ENCODE measurements at regions of chr11 and their contacts with region 1.

Region 1: DNA sequence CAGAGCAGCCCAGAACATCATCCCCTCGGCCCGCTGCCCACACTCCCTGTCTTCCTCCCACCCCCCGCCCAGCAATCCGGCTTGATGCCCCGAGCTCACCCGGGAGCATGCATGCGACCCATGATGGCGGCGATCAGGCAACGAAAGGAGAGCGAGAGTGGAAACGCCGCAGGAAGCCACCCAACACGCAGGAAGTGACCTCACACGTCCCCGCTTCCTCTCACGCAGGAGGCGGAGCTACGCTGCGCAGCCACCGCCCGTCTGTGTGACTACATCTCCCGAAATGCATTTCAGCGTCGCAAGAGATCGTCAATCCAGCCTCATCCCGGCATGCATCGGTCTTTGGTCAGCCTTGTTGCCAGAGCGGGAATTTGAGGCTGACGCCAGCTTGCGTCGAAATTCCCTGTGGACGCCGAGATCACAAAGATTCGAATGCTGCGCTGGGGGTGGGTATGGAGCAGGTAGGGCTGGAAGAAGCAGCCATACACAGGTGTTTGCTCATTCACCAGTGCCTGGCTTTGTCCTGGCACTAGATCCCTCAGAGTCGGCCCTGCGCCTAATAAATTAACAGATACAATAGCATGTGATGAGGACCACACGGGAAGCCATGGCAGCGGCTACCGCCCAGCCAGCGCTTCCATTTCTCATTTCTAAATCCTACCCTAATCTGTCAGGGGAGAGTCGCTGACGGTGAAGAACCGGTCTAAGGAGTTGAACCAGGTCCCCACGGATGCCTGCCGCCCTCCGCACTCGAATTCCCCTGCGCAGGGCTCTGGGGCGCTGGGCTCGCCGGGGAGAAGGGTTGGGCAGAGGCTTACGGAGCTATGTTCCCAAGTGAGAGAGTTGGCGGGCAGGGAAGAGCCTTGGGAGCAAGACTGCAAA is at the start of gene RPS13:
- DNase-seq: peak; percentile 99
- ATAC-seq: peak; percentile 95
- H3K4me3 ChIP-seq: peak within 1 kb of the TSS; percentile 79
- H3K27ac ChIP-seq: peak within 1 kb of the TSS; percentile 63
- H3K4me1 ChIP-seq: peaks cover 19% of the 10 kb centered on the region
- H3K27me3 ChIP-seq: no peaks in the 10 kb centered on the region
- CTCF ChIP-seq: no peak
- total RNA-seq, gene RPS13: 676 and 892 TPM in 2 replicates

Region 2: GRCh38 chr11:16791191-16791961 is 286.4 kb before region 1 on chr11:
- CTCF ChIA-PET with region 1: no interaction called
- POLR2A ChIA-PET with region 1: interaction called, 12 read pairs
- intact Hi-C with region 1: no loop called
- DNase-seq: peak; percentile 88
- ATAC-seq: peak; percentile 64
- H3K4me3 ChIP-seq: no peak overlapping the region
- H3K27ac ChIP-seq: peak overlapping the region; percentile 68
- H3K4me1 ChIP-seq: peaks cover 51% of the 10 kb centered on the region
- H3K27me3 ChIP-seq: no peaks in the 10 kb centered on the region
- CTCF ChIP-seq: no peak

Region 3: DNA sequence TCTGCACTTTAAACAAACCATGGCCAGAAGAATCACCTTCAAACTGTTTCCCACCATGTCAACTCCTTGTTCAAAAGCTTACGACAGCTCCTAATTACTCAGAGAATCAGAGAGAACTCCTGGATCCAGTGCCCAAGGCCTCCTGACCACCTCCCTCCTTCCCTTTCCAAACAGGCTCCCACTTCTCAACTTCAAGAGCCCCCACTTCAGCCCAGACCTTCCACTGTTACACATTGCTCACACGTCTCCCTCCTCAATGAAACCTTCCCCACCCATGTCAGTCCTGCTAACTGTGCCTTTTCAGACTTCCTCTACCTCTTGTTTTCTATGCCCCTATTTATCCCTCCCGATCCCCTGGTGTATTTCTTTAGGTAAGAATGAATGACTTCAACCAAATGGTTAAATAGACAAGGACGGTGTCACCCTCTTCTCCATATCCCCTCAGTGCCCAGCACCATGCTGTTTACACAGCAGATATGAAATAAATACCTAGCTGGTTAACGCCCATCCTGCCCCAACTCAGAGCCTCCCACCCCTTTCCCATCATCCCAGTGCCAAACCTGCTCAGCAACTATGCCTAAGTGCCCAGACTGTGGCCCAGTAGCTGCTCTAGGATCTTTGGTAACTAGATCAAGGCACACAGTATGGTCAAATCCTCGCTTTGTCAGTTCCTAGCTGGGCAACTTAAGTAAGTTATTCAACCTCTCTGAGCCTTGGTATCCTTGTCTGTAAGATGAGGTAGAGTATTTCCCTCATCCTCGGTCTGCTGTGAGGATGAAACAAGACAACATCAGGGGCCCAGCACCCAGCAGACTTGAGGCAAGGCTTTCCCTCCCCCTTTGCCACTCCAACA is 100.4 kb before region 1 on chr11:
- CTCF ChIA-PET with region 1: no interaction called
- POLR2A ChIA-PET with region 1: no interaction called
- intact Hi-C with region 1: no loop called
- DNase-seq: no peak
- ATAC-seq: no peak
- H3K4me3 ChIP-seq: no peak overlapping the region
- H3K27ac ChIP-seq: no peak overlapping the region
- H3K4me1 ChIP-seq: peaks cover 8% of the 10 kb centered on the region; the same call in 1 of the 2 replicates
- H3K27me3 ChIP-seq: no peaks in the 10 kb centered on the region
- CTCF ChIP-seq: no peak

Region 4: DNA sequence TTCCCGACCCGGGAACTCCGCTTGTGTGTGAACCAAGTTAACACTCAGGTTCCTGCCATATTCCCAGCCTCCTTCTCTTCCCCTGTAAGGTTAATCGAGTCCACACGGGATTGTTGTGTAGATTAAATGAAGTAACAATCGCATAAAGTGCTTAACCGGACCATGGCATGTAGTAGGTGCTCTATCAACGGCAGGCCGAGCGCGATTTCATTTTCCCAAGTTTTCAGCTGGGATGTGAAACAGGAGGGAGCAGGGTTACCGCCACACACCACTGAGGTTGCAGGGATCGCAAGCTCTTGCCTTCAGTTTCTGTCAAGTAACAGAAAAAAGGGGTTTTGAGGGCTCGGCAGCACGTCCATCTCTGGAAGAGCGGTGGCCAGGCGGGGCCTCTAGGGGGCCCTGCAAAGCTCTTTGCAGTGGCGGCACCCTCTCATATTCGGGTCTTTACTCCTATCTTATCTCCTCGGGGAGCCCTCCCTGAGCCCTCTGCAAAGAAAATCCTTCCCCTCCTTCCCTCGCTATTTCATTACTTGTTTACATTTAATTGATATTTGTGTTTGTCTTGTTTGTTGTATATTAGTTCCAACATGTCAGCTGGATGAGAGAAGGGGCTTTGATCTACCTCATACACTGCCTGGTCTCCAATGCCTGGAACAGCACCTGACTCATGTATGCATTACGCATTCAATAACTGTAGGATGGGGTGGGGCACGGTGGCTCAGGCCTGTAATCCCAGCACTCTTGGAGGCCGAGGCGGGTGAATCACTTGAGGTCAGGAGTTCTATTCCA is 62.7 kb before region 1 on chr11:
- CTCF ChIA-PET with region 1: no interaction called
- POLR2A ChIA-PET with region 1: no interaction called
- intact Hi-C with region 1: loop called (anchors 2 kb)
- DNase-seq: peak; percentile 83
- ATAC-seq: peak; percentile 39
- H3K4me3 ChIP-seq: peak overlapping the region; percentile 73
- H3K27ac ChIP-seq: peak overlapping the region; percentile 42
- H3K4me1 ChIP-seq: peaks cover 30% of the 10 kb centered on the region
- H3K27me3 ChIP-seq: no peaks in the 10 kb centered on the region
- CTCF ChIP-seq: peak; percentile 76

Region 5: DNA sequence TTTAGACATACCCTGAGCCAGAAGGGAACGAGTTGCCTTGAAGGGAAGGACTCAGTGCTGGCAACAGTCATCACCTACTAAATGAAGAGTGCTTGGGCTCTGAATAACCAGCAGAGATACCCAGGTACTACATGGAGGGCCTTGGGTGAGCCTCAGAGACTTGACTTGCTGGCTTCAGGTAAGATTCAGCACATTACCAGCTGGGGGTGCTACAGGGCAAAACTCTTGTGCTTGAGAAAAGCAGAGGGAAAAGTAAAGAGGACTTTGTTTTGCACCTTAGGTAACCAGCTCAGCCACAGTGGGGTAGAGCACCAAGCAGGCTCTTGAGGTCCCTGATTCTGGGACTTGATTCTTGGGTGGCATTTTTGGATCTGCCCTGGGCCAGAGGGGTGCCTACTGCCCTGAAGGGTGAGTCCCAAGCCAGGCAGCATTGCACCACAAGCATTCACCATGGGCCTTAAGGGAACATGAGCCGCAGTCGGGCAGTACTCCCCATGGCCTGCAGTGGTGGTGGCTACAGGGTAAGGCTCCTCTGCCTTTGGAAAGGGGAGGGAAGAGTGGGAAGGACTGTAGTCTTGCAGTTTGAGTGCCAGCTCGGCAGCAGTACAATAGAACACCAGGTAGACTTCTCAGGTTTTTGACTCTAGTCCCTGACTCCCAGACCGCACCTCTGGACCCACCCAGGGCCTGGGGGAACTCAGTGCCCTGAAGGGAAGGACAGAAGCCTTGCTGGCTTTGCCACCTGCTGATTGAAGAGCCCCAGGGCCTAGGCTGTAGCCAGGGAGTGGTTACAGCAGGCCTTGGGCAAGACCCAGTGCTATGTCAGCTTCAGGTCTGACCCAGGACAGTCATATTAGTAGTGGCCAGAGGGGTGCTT is 40.9 kb before region 1 on chr11:
- CTCF ChIA-PET with region 1: no interaction called
- POLR2A ChIA-PET with region 1: no interaction called
- intact Hi-C with region 1: no loop called
- DNase-seq: peak; percentile 26
- ATAC-seq: no peak
- H3K4me3 ChIP-seq: no peak overlapping the region
- H3K27ac ChIP-seq: no peak overlapping the region
- H3K4me1 ChIP-seq: no peaks in the 10 kb centered on the region
- H3K27me3 ChIP-seq: no peaks in the 10 kb centered on the region
- CTCF ChIP-seq: 0 out of 2 replicates have a peak, but pooled peaks have one; percentile 29

Region 6: DNA sequence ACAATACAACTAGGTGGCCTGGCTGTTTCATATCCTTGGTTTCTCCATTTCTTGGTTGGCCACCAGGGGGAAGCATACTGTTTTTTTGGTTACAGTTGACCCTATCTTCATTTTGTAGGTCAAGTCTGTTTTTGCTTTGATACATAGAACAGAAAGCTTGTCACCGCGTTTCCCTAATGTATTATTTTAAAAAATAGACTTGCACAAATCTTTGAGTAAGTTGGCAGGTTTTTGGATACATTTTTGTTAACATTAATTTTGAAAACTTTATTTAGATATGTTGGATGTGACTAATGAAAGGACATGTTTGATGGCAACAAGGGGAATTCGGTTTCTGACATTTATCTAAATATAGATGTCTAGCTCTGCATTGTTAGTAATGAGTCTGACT is 276.8 kb after region 1 on chr11:
- CTCF ChIA-PET with region 1: no interaction called
- POLR2A ChIA-PET with region 1: no interaction called
- intact Hi-C with region 1: loop called (anchors 5 kb)
- DNase-seq: peak; percentile 73
- ATAC-seq: peak; percentile 14; the same call in 1 of the 2 replicates
- H3K4me3 ChIP-seq: peak overlapping the region; percentile 69
- H3K27ac ChIP-seq: no peak overlapping the region
- H3K4me1 ChIP-seq: peaks cover 5% of the 10 kb centered on the region; the same call in 1 of the 2 replicates
- H3K27me3 ChIP-seq: no peaks in the 10 kb centered on the region
- CTCF ChIP-seq: peak; percentile 75

Measured in PC-3 (cell line).